Vagina (tissue), 2 donors: ENCODE measurements at regions of chr4 and their contacts with region 1.

Region 1: GRCh38 chr4:68375667-68376559 is 26.0 kb upstream of the YTHDC1 start:
- DNase-seq: no peak
- H3K4me3 ChIP-seq: no peak overlapping the region
- H3K27ac ChIP-seq: no peak overlapping the region
- H3K4me1 ChIP-seq: peaks cover 4% of the 10 kb centered on the region
- H3K27me3 ChIP-seq: no peaks in the 10 kb centered on the region
- CTCF ChIP-seq: peak; percentile 41 to 60 (median 55)
- POLR2A ChIP-seq: no peak

Region 2: DNA sequence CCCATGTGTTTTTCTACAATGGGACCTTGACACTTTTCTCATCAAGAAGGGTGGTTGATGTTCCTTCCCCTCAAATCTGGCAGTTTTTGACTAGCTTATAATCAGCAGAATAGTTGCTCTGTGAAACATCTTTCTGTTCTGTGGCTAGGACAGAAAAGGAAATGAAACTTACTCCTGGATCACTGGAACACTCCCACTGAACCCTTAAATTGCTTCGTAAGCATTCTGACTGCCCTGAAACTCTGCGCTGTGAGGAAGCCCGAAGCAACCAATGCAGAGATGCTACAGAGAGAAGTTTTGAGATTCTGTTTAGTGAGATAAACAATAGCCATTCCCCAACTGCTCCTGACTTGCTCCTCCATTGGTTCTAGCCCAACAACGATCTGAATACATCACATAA is 1432.8 kb before region 1 on chr4:
- intact Hi-C with region 1: no loop called
- DNase-seq: no peak
- H3K4me3 ChIP-seq: no peak overlapping the region
- H3K27ac ChIP-seq: no peak overlapping the region
- H3K4me1 ChIP-seq: no peaks in the 10 kb centered on the region
- H3K27me3 ChIP-seq: no peaks in the 10 kb centered on the region
- CTCF ChIP-seq: no peak
- POLR2A ChIP-seq: no peak

Region 3: DNA sequence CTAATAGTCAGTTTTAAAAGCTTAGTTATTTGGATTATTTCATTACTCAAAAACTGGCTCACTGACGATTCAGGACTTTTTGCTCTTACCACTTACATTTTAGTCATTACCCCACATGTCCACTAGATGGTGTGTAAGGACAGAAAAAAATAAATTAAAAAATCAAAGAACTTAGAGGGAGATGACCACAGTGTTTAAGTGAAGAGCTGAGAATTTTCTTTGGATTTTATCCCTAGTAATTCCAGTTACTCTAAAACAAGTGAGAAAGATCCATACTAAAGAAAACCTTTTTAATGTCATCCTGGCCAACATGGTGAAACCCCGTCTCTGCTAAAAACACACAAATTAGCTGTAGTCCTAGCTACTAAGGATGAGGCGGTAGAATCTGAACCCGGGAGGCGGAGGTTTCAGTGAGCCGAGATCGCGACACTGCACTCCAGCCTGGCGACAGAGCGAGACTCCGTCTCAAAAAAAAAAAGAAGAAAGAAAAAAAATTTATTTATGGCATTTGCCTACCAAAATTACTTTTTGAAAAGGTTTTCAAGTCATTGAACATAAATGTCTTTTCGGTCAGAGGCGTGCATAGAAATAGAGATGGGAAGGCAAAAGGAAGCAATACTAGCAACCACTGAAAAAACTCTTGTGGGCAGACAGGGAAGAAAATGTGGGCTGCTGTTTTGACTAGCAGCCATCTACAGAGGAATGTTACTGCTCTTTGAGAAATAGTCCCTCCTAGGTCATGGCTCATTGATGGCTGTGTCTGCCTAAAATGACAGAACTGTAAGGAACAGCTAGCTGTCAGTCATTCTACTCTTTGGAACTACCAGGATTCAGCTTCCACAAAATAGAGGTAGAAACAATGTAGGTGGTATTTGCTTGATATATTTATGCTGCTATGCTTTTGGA is 103.8 kb before region 1 on chr4:
- intact Hi-C with region 1: loop called (anchors 5 kb)
- DNase-seq: no peak
- H3K4me3 ChIP-seq: no peak overlapping the region
- H3K27ac ChIP-seq: no peak overlapping the region
- H3K4me1 ChIP-seq: no peaks in the 10 kb centered on the region
- H3K27me3 ChIP-seq: no peaks in the 10 kb centered on the region
- CTCF ChIP-seq: peak; percentile 50 to 76 (median 66)
- POLR2A ChIP-seq: no peak

Region 4: DNA sequence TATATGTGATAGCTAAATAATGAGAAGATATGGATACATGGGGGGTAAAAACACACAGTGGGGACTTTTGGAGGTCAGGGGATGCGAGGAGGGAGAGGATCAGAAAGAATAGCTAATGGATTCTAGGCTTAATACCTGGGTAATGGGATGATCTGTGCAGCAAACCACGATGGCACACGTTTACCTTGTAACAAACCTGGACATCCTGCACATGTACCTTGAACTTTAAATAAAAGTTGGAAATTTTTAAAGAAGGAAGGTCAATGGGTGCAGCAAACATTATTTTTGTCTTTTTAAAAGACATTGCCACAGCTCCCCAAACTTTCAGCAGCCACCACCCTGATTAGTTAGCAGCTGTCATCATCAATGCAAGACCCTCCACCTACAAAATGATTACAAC is 324.2 kb after region 1 on chr4:
- intact Hi-C with region 1: no loop called
- DNase-seq: no peak
- H3K4me3 ChIP-seq: no peak overlapping the region
- H3K27ac ChIP-seq: no peak overlapping the region
- H3K4me1 ChIP-seq: no peaks in the 10 kb centered on the region
- H3K27me3 ChIP-seq: no peaks in the 10 kb centered on the region
- CTCF ChIP-seq: no peak
- POLR2A ChIP-seq: no peak